HEK293 (cell line): ENCODE measurements at regions of chr9 and their contacts with region 1.

Region 1: DNA sequence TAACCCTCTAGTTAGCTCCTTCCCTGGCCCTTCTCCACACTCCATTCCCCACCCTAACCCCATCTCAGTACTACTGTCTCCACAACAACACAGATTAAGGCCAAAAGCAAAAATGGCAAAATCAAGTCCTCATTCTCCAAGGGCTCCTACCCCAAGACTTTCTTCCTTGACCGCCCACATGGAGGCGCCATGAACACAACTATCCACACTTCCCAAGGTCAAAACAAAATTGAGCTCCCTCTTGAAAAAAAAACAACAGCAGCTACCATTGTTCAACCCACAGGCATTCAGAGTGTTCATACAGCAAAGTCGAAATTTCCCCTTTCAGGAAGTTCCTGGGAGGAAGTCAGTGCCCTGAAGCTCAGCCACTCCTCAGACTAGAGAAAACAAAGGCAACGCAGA is 54.4 kb downstream of the GNAQ start:
- H3K4me3 ChIP-seq: no peak overlapping the region
- H3K27ac ChIP-seq: no peak overlapping the region
- H3K4me1 ChIP-seq: peaks cover 12% of the 10 kb centered on the region
- CTCF ChIP-seq: peak; percentile 48

Region 2: DNA sequence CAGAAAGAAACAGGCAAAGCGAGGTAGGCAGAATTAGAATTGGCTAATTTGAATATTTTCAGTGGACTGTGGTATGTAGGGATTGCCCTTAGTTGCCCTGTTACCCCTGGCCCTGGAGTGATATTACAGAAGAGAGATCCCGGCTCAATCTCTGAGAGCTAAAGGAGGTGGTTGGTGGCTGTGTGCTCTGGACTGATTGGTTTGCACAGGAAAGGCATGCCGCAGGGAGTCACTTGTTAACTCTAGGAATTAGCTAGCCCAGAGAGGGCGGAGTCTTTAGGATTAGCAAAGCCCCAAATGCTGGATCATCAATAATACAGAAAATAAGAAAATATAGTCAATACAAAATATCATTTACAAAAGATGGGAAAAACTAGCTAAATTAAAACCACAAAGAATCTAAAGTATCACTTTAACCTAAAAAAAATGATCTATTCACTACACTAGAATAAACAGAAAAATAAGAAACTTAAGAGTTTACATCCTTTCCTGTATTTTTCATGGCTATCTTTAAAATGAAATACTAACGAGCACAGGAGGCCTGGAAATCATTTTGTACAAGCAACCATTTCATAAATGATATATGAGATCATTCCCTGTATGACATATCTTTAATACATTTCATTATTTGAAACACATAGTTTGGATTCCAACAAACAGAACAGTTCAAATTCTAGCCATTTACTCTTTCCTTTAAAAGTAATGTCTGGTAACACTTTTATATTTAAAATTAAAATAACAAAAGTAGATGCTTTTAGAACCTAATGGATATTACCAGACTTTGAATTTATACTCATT is 16.7 kb before region 1 on chr9:
- CTCF ChIA-PET with region 1: interaction called, 18 read pairs
- POLR2A ChIA-PET with region 1: no interaction called
- H3K4me3 ChIP-seq: no peak overlapping the region
- H3K27ac ChIP-seq: no peak overlapping the region
- H3K4me1 ChIP-seq: peaks cover 3% of the 10 kb centered on the region; the same call in 1 of the 2 replicates
- CTCF ChIP-seq: no peak

Region 3: DNA sequence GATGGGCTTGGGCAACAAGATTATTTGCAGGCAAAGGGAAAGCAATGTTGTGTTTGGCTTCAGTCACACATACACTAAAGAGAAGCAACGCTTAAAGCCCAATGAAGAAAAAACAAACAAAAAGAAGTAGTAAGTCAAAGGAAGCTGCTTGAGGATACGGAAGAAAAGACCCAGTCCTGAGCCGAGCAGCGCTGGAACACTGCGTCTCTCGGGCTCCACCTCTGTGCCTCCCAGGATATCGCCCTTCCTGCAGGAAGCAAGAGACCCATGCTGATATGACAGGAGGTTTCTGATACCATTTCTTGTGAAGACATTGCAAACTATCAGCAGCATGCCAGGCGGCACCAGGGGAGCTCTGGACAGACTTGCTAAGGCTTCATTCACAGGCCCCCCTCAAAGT is 44.5 kb after region 1 on chr9:
- CTCF ChIA-PET with region 1: interaction called, 13 read pairs
- POLR2A ChIA-PET with region 1: no interaction called
- H3K4me3 ChIP-seq: no peak overlapping the region
- H3K27ac ChIP-seq: no peak overlapping the region
- H3K4me1 ChIP-seq: peaks cover 12% of the 10 kb centered on the region
- CTCF ChIP-seq: peak; percentile 50; the same call in 1 of the 2 replicates

Region 4: GRCh38 chr9:78115073-78115472 is 137.9 kb after region 1 on chr9:
- CTCF ChIA-PET with region 1: interaction called, 37 read pairs
- POLR2A ChIA-PET with region 1: no interaction called
- H3K4me3 ChIP-seq: no peak overlapping the region
- H3K27ac ChIP-seq: no peak overlapping the region
- H3K4me1 ChIP-seq: no peaks in the 10 kb centered on the region
- CTCF ChIP-seq: no peak

Region 5: GRCh38 chr9:78121488-78121887 is 144.3 kb after region 1 on chr9:
- CTCF ChIA-PET with region 1: interaction called, 37 read pairs
- POLR2A ChIA-PET with region 1: no interaction called
- H3K4me3 ChIP-seq: no peak overlapping the region
- H3K27ac ChIP-seq: no peak overlapping the region
- H3K4me1 ChIP-seq: no peaks in the 10 kb centered on the region
- CTCF ChIP-seq: no peak